ENCODE measurements at regions of chr3 and their contacts with region 1.

Region 1: GRCh38 chr3:120095226-120095978 is 1.2 kb upstream of the GSK3B start:
- DNase-seq: peak; percentile 71 to 90 (median 79)
- ATAC-seq: peak; percentile 37
- H3K4me3 ChIP-seq: peak overlapping the region; percentile 69
- H3K4me3 Mint-ChIP-seq: no peak overlapping the region
- H3K27ac ChIP-seq: peak overlapping the region; percentile 92
- H3K27ac Mint-ChIP-seq: peak overlapping the region in 1 of 9 donors; percentile 99
- H3K4me1 ChIP-seq: peaks cover 11 to 26% of the 10 kb centered on the region in 2 donors
- H3K4me1 Mint-ChIP-seq: peaks cover 16 to 38% (median 31%) of the 10 kb centered on the region in 7 donors
- H3K27me3 ChIP-seq: no peaks in the 10 kb centered on the region
- H3K27me3 Mint-ChIP-seq: peaks cover 0 to 5% (median 0%) of the 10 kb centered on the region in 5 donors

Region 2: GRCh38 chr3:119322835-119323722 is 772.3 kb before region 1 on chr3:
- CTCF ChIA-PET with region 1: no interaction called
- POLR2A ChIA-PET with region 1: no interaction called
- intact Hi-C with region 1: loop called (anchors 1 to 2 kb)
- DNase-seq: peak; percentile 77 to 96 (median 81)
- ATAC-seq: peak; percentile 90
- H3K4me3 ChIP-seq: peak overlapping the region; percentile 65
- H3K4me3 Mint-ChIP-seq: peak overlapping the region; percentile 84 to 96 (median 90)
- H3K27ac ChIP-seq: peak overlapping the region; percentile 81
- H3K27ac Mint-ChIP-seq: peak overlapping the region; percentile 90 to 99 (median 95)
- H3K4me1 ChIP-seq: peaks cover 10 to 14% of the 10 kb centered on the region in 2 donors
- H3K4me1 Mint-ChIP-seq: peaks cover 12 to 30% (median 21%) of the 10 kb centered on the region in 7 donors
- H3K27me3 ChIP-seq: no peaks in the 10 kb centered on the region
- H3K27me3 Mint-ChIP-seq: peaks cover 0 to 57% (median 0%) of the 10 kb centered on the region in 5 donors

Region 3: GRCh38 chr3:119676771-119677640 is 418.4 kb before region 1 on chr3 and contains the start of gene COX17:
- CTCF ChIA-PET with region 1: no interaction called
- POLR2A ChIA-PET with region 1: no interaction called
- intact Hi-C with region 1: loop called (anchors 1 kb)
- DNase-seq: peak; percentile 87 to 98 (median 96)
- ATAC-seq: peak; percentile 91
- H3K4me3 ChIP-seq: peak within 1 kb of the TSS; percentile 62
- H3K4me3 Mint-ChIP-seq: peak within 1 kb of the TSS; percentile 78 to 98 (median 90)
- H3K27ac ChIP-seq: peak within 1 kb of the TSS; percentile 72
- H3K27ac Mint-ChIP-seq: peak within 1 kb of the TSS; percentile 94 to 99 (median 96)
- H3K4me1 ChIP-seq: peaks cover 14 to 16% of the 10 kb centered on the region in 2 donors
- H3K4me1 Mint-ChIP-seq: peaks cover 19 to 46% (median 41%) of the 10 kb centered on the region in 7 donors
- H3K27me3 ChIP-seq: no peaks in the 10 kb centered on the region
- H3K27me3 Mint-ChIP-seq: peaks cover 0 to 3% (median 0%) of the 10 kb centered on the region in 5 donors
- total RNA-seq, gene COX17: 25.6 to 55.0 (median 34.8) TPM

Region 4: DNA sequence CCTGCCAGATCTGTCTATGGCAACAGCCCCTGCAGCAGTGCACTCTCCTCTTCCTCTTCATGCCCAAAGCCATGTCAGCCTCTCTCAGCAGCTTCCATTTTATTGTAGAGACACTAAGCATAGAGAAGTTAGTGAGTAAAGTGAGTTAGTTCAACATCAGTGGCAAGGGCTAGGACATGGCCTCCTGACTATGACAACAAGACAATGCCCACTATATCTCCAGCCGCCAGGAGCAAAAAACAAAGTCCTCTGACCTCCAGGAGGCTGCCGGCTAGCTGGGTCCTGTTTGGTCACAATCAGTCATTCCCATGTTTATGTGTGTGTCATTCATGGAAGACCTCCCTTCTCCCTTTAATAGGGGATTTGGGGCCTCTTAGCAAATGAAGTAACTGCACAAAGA is 298.6 kb before region 1 on chr3:
- CTCF ChIA-PET with region 1: no interaction called
- POLR2A ChIA-PET with region 1: no interaction called
- intact Hi-C with region 1: no loop called
- DNase-seq: no peak
- ATAC-seq: no peak
- H3K4me3 ChIP-seq: no peak overlapping the region
- H3K4me3 Mint-ChIP-seq: no peak overlapping the region
- H3K27ac ChIP-seq: no peak overlapping the region
- H3K27ac Mint-ChIP-seq: no peak overlapping the region
- H3K4me1 ChIP-seq: no peaks in the 10 kb centered on the region
- H3K4me1 Mint-ChIP-seq: peaks cover 0 to 1% (median 0%) of the 10 kb centered on the region in 7 donors
- H3K27me3 ChIP-seq: no peaks in the 10 kb centered on the region
- H3K27me3 Mint-ChIP-seq: peaks cover 5 to 30% (median 14%) of the 10 kb centered on the region in 5 donors

Region 5: GRCh38 chr3:119912220-119912619 is 183.2 kb before region 1 on chr3:
- CTCF ChIA-PET with region 1: no interaction called
- POLR2A ChIA-PET with region 1: no interaction called
- intact Hi-C with region 1: loop called (anchors 1 to 5 kb)
- DNase-seq: no peak
- ATAC-seq: peak; percentile 22
- H3K4me3 ChIP-seq: no peak overlapping the region
- H3K4me3 Mint-ChIP-seq: peak overlapping the region in 9 of 10 donors; percentile 2 to 58 (median 47)
- H3K27ac ChIP-seq: no peak overlapping the region
- H3K27ac Mint-ChIP-seq: peak overlapping the region in 7 of 9 donors; percentile 26 to 77 (median 41)
- H3K4me1 ChIP-seq: peaks cover 7 to 17% of the 10 kb centered on the region in 2 donors
- H3K4me1 Mint-ChIP-seq: peaks cover 10 to 46% (median 33%) of the 10 kb centered on the region in 7 donors
- H3K27me3 ChIP-seq: no peaks in the 10 kb centered on the region
- H3K27me3 Mint-ChIP-seq: no peaks in the 10 kb centered on the region

Region 6: GRCh38 chr3:120081719-120082118 is 13.7 kb before region 1 on chr3:
- CTCF ChIA-PET with region 1: interaction called, 3 read pairs
- POLR2A ChIA-PET with region 1: interaction called, 12 read pairs
- intact Hi-C with region 1: loop called in 1 of 2 experiments (anchors 1 kb)
- DNase-seq: no peak
- ATAC-seq: no peak
- H3K4me3 ChIP-seq: no peak overlapping the region
- H3K4me3 Mint-ChIP-seq: peak overlapping the region in 1 of 10 donors; percentile 24
- H3K27ac ChIP-seq: no peak overlapping the region
- H3K27ac Mint-ChIP-seq: no peak overlapping the region
- H3K4me1 ChIP-seq: peaks cover 8 to 14% of the 10 kb centered on the region in 2 donors
- H3K4me1 Mint-ChIP-seq: peaks cover 40 to 82% (median 77%) of the 10 kb centered on the region in 7 donors
- H3K27me3 ChIP-seq: no peaks in the 10 kb centered on the region
- H3K27me3 Mint-ChIP-seq: no peaks in the 10 kb centered on the region

Region 7: GRCh38 chr3:120596116-120596852 is 500.9 kb after region 1 on chr3 and contains the start of gene NDUFB4:
- CTCF ChIA-PET with region 1: no interaction called
- POLR2A ChIA-PET with region 1: interaction called, 9 read pairs
- intact Hi-C with region 1: loop called (anchors 1 kb)
- DNase-seq: peak; percentile 84 to 97 (median 93)
- ATAC-seq: peak; percentile 97
- H3K4me3 ChIP-seq: peak within 1 kb of the TSS; percentile 99
- H3K4me3 Mint-ChIP-seq: peak within 1 kb of the TSS in 8 of 10 donors; percentile 85 to 99 (median 96)
- H3K27ac ChIP-seq: peak within 1 kb of the TSS; percentile 92
- H3K27ac Mint-ChIP-seq: peak within 1 kb of the TSS in 5 of 9 donors; percentile 94 to 99 (median 98)
- H3K4me1 ChIP-seq: peaks cover 25 to 27% of the 10 kb centered on the region in 2 donors
- H3K4me1 Mint-ChIP-seq: peaks cover 0 to 20% (median 11%) of the 10 kb centered on the region in 7 donors
- H3K27me3 ChIP-seq: no peaks in the 10 kb centered on the region
- H3K27me3 Mint-ChIP-seq: peaks cover 0 to 20% (median 0%) of the 10 kb centered on the region in 5 donors
- total RNA-seq, gene NDUFB4: 63.4 to 126 (median 76.2) TPM

Region 8: DNA sequence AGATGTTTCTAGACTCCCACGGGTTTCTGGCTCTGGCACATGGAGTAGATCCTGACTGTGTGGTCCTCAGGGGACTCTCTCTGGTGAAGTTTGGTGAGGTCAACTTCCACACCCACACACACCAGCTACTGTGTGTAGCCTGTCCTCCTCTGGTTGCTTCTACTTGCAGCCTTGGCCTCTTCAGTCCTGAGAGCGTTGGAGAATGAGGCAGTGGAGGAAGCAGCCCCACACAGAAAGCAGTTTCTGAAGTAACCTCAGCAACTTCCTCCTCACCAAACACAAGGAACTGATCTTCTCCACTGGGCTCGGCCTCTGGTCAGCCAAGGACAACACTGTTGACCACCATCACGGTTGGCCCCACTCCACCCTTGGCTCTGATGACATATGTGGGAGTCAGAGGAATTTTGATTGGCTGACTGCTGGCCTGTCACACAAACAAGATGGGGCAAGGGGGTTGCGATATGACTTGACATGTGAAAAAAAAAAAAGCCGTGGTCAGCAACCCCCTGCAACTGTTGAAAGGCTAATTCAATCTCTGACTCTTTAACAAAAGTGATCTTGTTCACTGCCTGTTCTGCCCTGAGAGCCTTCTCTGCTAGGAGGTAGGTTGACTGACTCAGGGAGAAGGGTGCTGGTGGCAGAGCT is 1979.3 kb after region 1 on chr3:
- CTCF ChIA-PET with region 1: no interaction called
- POLR2A ChIA-PET with region 1: no interaction called
- intact Hi-C with region 1: no loop called
- DNase-seq: peak in 1 of 9 donors; percentile 35
- ATAC-seq: peak; percentile 81
- H3K4me3 ChIP-seq: no peak overlapping the region
- H3K4me3 Mint-ChIP-seq: peak overlapping the region in 1 of 10 donors; percentile 69
- H3K27ac ChIP-seq: no peak overlapping the region
- H3K27ac Mint-ChIP-seq: peak overlapping the region in 1 of 9 donors; percentile 92
- H3K4me1 ChIP-seq: no peaks in the 10 kb centered on the region
- H3K4me1 Mint-ChIP-seq: peaks cover 0 to 46% (median 0%) of the 10 kb centered on the region in 7 donors
- H3K27me3 ChIP-seq: peaks cover 0 to 4% of the 10 kb centered on the region in 2 donors
- H3K27me3 Mint-ChIP-seq: peaks cover 7 to 43% (median 32%) of the 10 kb centered on the region in 5 donors

Measured in naive thymus-derived CD4-positive, alpha-beta T cell (primary cell).